ENCODE measurements at regions of chr12 and their contacts with region 1.

Region 1: DNA sequence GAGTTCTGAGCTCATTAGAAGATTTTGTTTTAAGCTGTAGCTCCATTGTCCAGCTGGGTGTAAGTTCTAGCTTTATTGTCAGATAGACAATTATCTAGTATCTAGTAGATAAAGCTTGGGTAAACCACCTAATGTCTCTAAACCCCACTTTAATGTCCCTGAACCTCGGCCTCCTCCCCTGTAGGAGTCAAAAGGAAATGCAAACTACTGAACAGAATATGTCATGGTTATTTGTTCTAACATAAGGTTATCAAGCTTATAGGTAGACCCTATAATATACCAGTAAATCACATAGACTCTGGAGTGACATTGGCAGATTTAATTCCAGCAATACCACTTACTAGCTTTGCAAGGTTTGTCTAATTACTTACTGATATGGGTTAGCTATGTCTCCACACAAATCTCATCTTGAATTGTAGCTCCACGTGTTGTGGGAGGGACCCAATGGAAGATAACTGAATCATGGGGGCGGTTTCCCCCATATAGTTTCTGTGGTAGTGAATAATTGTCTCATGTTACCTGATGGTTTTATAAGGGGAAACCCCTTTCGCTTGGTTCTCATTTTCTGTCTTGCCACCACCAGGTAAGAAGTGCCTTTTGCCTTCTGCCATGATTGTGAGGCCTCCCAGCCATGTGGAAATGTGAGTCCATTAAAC is 29.4 kb downstream of the BCAT1 start:
- DNase-seq: no peak
- H3K4me3 Mint-ChIP-seq: no peak overlapping the region
- H3K27ac Mint-ChIP-seq: no peak overlapping the region
- H3K4me1 Mint-ChIP-seq: peaks cover 28% of the 10 kb centered on the region
- H3K27me3 Mint-ChIP-seq: peaks cover 20% of the 10 kb centered on the region

Region 2: DNA sequence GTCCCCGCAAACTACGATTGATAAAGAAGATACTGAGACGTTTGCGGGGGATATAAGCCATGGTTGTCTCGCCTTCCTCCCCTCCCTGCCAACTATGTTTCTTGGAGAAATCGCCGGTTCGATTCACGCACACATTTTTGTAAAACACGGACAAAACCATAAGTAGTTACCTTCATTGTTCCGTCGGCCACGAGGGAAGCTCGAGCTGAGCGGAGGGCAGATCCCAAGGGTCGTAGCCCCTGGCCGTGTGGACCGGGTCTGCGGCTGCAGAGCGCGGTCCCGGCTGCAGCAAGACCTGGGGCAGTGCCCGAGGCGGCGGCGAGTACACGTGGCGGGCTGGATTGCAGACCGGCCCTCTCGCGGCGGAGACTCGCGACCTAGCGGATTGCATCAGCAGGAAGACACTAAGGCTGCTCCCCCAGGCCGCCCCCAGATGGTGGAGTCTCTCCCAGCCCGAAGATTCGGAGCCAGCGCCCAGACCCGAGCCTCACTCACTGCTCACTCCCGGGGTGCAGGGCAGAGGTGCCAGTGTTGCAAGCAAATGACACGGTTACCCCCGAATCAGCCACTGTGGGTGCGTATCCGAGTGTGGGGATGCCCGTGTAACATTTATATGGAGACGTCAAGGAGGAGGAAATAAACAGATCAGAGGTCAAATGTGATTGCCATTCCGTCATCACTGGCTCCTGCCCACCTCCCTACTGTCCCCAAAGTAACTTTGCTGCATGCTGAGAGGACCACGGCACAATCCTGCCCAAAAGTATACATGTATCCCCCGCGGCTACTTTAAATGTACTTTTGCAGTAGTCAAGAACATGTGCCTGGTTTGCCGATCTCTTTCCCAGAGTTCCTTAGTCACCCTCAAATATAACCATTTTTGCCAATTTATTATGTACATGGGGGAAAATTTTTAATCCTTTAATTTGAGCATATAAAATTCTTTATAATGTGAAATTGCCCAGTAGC is 29.6 kb after region 1 on chr12 and contains the start of gene BCAT1:
- intact Hi-C with region 1: loop called (anchors 1 kb)
- DNase-seq: peak; percentile 18
- H3K4me3 Mint-ChIP-seq: peak within 1 kb of the TSS; percentile 82
- H3K27ac Mint-ChIP-seq: peak within 1 kb of the TSS; percentile 72
- H3K4me1 Mint-ChIP-seq: peaks cover 42% of the 10 kb centered on the region
- H3K27me3 Mint-ChIP-seq: peaks cover 45% of the 10 kb centered on the region
- total RNA-seq, gene BCAT1: 12.7 and 12.9 TPM in 2 replicates

Measured in activated T-helper 2 cell treated with anti-CD3 and anti-CD28 coated beads, Interferon-gamma antibody, Interleukin-2, Interleukin-4, amounts not matched to agents 10 μg/mL and 5 μg/mL and 100 μg/mL, durations not matched to agents 14 hours and 24 hours and 36 hours (primary cell).